ENCODE measurements at regions of chr2 and their contacts with region 1.

Region 1: DNA sequence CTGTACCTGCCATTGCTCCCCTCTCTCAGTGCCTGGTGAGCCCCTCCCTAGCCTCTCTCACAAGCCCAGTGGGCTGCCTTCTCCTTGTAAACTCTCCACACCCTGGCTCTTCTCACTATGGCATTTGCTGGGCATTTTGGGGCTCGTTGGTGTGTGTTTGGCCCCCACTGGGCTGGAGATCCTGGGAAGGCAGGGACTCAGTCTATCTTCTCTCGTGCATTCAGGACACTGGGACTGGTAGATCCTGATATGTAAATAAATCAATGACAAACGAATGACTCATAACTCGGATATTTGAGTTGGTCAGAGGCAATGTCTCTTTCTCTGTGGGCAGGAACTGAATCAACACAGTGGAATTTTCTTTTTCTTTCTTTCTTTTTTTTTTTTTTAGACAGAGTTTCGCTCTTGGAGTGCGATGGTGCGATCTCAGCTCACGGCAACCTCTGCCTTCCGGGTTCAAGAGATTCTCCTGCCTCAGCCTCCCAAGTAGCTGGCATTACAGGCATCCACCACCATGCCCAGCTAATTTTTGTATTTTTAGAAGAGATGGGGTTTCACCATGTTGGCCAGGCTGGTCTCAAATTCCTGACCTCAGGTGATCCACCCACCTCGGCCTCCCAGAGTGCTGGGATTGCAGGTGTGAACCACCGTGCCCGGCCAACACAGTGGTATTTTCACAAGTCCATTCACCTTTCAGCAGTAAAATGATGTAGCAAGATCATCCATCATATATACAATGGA is 144.6 kb upstream of the SPRED2 start:
- DNase-seq: peak; percentile 92
- H3K4me3 ChIP-seq: no peak overlapping the region
- H3K27ac ChIP-seq: peak overlapping the region; percentile 89
- H3K4me1 ChIP-seq: peaks cover 16% of the 10 kb centered on the region
- H3K27me3 ChIP-seq: no peaks in the 10 kb centered on the region
- CTCF ChIP-seq: no peak

Region 2: DNA sequence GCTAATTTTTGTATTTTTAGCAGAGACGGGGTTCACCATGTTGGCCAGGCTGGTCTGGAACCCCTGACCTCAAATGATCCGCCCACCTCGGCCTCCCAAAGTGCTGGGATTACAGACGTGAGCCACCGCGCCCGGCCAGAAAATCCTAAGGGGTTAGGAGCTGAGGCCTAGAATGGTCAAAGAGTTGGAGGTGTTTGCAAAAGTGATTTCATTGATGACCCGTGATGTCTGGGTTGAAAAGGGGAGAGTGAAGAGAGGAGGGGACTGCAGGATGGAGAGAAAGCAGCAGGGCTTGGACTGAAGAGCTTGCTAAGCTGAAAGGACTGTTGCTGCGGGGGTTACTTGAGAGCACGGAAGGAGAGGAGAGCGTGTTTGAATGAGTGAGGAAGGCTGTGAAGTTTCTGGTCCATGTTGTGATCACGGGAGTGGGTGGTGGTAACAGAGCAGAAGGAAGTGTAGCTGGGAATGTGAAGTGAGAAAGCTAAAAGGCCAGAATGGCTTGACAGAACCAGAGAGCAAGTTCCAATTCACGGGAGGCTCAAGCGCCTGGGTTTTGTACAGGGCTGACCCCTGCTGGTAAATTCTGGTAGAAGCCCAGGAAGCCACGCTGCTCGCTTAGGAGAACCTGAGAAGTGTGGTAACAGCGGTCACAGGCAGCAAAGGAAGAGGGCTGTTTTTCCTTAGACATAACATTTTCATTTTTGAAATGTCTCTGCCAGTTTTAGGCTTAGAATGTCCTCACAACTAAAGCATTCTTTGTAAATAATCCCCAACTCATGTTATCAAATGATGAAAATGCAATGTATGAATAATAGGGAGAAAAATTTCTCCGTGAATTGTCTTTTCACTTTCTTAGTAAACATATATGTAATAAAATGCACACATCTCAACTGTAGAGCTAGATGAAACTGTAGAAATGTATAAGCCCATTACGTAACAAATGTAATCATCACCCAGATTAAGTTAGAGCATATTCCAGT is 389.9 kb before region 1 on chr2:
- CTCF ChIA-PET with region 1: no interaction called
- dilution Hi-C with region 1: no loop called
- in situ Hi-C with region 1: no loop called
- intact Hi-C with region 1: loop called (anchors 5 kb)
- DNase-seq: peak; percentile 58
- H3K4me3 ChIP-seq: no peak overlapping the region
- H3K27ac ChIP-seq: no peak overlapping the region
- H3K4me1 ChIP-seq: no peaks in the 10 kb centered on the region
- H3K27me3 ChIP-seq: no peaks in the 10 kb centered on the region
- CTCF ChIP-seq: peak; percentile 74 to 86

Region 3: DNA sequence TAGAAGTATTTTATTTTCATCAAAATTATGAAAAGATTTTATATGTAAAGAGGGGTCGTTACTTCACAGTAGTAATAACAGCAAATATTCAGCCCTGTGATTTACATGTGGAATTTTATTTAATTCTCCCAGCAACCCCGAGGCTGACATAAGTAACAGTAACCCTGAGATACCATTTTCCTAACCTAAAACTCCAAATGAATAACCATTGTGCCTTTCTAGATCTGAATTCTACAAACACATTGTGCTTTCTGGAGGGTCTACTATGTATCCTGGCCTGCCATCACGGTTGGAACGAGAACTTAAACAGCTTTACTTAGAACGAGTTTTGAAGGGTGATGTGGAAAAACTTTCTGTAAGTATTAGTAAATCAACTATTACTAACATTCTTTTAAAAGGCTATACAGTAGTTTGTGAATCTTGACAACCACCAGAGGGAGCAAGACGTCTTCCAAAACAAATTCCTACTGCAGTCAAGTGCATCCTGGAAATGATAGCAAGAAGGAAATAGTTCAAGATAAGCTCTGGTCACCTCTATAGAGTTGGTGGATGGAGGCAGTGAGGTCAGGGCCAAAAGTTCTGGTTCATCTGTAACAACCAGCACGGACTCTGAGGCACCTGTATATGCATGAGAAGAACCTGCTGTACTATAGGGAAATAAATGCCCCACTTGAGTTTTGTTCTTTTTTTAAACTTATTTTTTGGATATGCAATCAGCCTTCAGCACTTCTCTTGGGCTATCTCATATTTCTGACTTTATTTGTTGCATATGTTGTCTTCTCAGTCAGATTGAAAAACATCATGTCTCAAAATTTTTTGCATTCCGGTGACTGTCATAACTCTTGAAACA is 312.0 kb before region 1 on chr2:
- CTCF ChIA-PET with region 1: no interaction called
- dilution Hi-C with region 1: no loop called
- in situ Hi-C with region 1: no loop called
- intact Hi-C with region 1: loop called (anchors 1 kb)
- DNase-seq: peak; percentile 51
- H3K4me3 ChIP-seq: no peak overlapping the region
- H3K27ac ChIP-seq: no peak overlapping the region
- H3K4me1 ChIP-seq: no peaks in the 10 kb centered on the region
- H3K27me3 ChIP-seq: no peaks in the 10 kb centered on the region
- CTCF ChIP-seq: peak; percentile 53 to 64

Region 4: DNA sequence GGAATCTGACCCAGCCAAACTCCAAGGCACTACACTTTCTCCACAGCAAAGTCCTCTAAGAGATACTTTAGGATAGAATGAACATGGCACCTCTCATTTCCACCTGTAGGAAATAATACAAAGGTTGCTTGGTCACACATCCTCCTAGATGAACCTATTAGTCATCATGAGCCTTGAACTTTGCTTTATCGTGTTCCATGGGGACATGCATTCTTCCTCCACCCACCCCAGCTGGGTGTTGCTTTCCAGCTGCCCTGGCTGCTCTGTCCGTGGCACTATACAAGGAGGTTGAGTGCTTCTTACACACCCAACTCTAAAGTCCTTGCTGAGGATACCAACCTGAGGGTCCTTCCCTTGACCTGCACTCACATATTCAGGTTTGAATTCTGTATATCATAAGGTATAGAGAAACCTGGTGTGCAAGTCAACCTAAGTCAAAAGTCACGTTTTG is 197.3 kb before region 1 on chr2:
- CTCF ChIA-PET with region 1: no interaction called
- dilution Hi-C with region 1: no loop called
- in situ Hi-C with region 1: no loop called
- intact Hi-C with region 1: no loop called
- DNase-seq: no peak
- H3K4me3 ChIP-seq: no peak overlapping the region
- H3K27ac ChIP-seq: no peak overlapping the region
- H3K4me1 ChIP-seq: peaks cover 85% of the 10 kb centered on the region
- H3K27me3 ChIP-seq: no peaks in the 10 kb centered on the region
- CTCF ChIP-seq: no peak

Region 5: GRCh38 chr2:65518751-65519445 is 58.1 kb before region 1 on chr2:
- CTCF ChIA-PET with region 1: no interaction called
- dilution Hi-C with region 1: no loop called
- in situ Hi-C with region 1: no loop called
- intact Hi-C with region 1: no loop called
- DNase-seq: no peak
- H3K4me3 ChIP-seq: no peak overlapping the region
- H3K27ac ChIP-seq: no peak overlapping the region
- H3K4me1 ChIP-seq: peaks cover 9% of the 10 kb centered on the region
- H3K27me3 ChIP-seq: no peaks in the 10 kb centered on the region
- CTCF ChIP-seq: no peak

Region 6: GRCh38 chr2:65605743-65606058 is 28.7 kb after region 1 on chr2:
- CTCF ChIA-PET with region 1: no interaction called
- dilution Hi-C with region 1: no loop called
- in situ Hi-C with region 1: no loop called
- intact Hi-C with region 1: no loop called
- DNase-seq: no peak
- H3K4me3 ChIP-seq: no peak overlapping the region
- H3K27ac ChIP-seq: no peak overlapping the region
- H3K4me1 ChIP-seq: peaks cover 8% of the 10 kb centered on the region
- H3K27me3 ChIP-seq: no peaks in the 10 kb centered on the region
- CTCF ChIP-seq: no peak

Measured in mammary epithelial cell (primary cell).